ENCODE measurements at regions of chr14 and their contacts with region 1.

Region 1: DNA sequence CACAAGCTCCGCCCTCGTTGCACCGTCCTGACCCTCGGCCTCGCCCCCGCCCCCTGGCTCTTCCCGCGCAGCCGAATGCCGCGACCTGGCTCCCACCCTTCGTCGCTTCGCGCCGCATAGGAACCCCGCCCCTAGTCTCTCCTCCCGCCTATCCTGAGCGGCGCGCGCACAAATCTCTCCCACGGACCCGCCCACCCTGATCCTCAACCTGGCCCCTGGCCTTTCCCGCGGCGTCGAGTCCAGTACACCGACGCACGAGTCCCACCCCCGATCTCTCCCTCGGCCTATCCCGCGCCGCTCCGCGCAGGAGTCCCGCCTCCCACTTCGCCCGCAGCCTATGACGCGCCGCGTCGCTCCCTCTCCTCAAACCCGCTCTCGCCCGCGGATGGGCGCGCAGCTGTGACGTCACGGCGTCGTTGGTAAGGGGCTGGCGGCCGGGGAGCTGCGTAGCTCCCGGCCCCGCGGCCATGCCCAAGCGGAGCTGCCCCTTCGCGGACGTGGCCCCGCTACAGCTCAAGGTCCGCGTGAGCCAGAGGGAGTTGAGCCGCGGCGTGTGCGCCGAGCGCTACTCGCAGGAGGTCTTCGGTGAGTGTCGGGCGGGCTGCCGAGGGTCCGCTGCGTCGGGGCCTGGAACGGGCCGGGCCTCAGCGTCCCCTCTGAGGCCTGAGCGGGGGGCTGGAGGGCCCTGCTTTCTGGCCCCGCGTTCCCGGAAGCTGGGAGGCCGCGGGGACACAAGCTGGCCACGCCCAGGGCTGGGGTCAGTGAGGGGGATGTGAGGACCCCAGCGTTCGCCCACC is at the start of gene SIVA1:
- DNase-seq: peak; percentile 100
- H3K4me3 Mint-ChIP-seq: peak within 1 kb of the TSS; percentile 78
- H3K27ac Mint-ChIP-seq: peak within 1 kb of the TSS; percentile 90
- H3K4me1 Mint-ChIP-seq: peaks cover 42% of the 10 kb centered on the region
- H3K27me3 Mint-ChIP-seq: no peaks in the 10 kb centered on the region
- total RNA-seq, gene SIVA1: 87.0 to 96.2 TPM

Region 2: DNA sequence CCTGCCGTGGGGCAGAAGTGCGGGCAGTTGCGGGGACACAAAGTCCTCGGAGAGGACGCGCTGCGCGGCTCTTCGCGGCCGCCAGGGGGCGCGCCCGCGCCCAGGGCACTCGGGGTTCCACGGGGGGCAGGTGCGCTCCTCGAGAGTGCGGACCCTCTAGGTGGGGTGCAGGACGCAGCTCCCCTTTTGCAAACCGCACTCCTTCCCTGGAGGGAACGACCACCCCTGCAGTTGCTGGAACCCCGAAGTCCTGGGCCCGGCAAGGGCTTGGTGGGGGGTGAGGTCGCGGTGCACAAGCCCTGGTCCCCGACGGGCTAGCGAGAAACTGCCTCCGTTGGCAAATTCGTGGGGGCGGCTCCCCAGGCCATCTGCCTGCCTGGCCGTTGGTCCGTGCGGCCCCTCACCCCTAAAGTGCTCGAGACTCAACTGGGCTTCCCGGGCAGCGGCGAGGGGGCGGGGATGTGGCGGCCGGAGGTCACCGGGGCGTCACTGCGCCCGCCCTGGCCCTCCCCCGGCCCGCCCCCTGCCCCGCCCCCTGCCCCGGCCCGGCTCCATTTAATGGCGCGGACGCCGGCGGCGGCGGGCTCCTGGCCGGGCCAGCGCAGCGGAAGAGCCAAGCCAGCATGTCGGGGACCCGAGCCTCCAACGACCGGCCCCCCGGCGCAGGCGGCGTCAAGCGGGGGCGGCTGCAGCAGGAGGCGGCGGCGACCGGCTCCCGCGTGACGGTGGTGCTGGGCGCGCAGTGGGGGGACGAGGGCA is 29.1 kb before region 1 on chr14 and contains the start of gene ADSS1:
- CTCF ChIA-PET with region 1: interaction called, 12 read pairs
- POLR2A ChIA-PET with region 1: interaction called, 29 read pairs
- DNase-seq: peak; percentile 66
- H3K4me3 Mint-ChIP-seq: peak within 1 kb of the TSS; percentile 52
- H3K27ac Mint-ChIP-seq: no peak within 1 kb of the TSS
- H3K4me1 Mint-ChIP-seq: no peaks in the 10 kb centered on the region
- H3K27me3 Mint-ChIP-seq: no peaks in the 10 kb centered on the region
- total RNA-seq, gene ADSS1: 0.98 to 1.2 TPM

Region 3: GRCh38 chr14:104735830-104736642 is 16.9 kb before region 1 on chr14:
- CTCF ChIA-PET with region 1: no interaction called
- POLR2A ChIA-PET with region 1: interaction called, 11 read pairs
- DNase-seq: no peak
- H3K4me3 Mint-ChIP-seq: no peak overlapping the region
- H3K27ac Mint-ChIP-seq: no peak overlapping the region
- H3K4me1 Mint-ChIP-seq: no peaks in the 10 kb centered on the region
- H3K27me3 Mint-ChIP-seq: peaks cover 6% of the 10 kb centered on the region

Region 4: GRCh38 chr14:104768437-104769323 is 15.7 kb after region 1 on chr14:
- CTCF ChIA-PET with region 1: interaction called, 29 read pairs
- POLR2A ChIA-PET with region 1: interaction called, 10 read pairs
- DNase-seq: peak; percentile 92
- H3K4me3 Mint-ChIP-seq: no peak overlapping the region
- H3K27ac Mint-ChIP-seq: peak overlapping the region; percentile 16
- H3K4me1 Mint-ChIP-seq: peaks cover 2% of the 10 kb centered on the region
- H3K27me3 Mint-ChIP-seq: no peaks in the 10 kb centered on the region

Region 5: GRCh38 chr14:104800015-104800770 is 47.3 kb after region 1 on chr14:
- CTCF ChIA-PET with region 1: interaction called, 3 read pairs
- POLR2A ChIA-PET with region 1: interaction called, 19 read pairs
- DNase-seq: peak; percentile 85
- H3K4me3 Mint-ChIP-seq: peak overlapping the region; percentile 57
- H3K27ac Mint-ChIP-seq: no peak overlapping the region
- H3K4me1 Mint-ChIP-seq: peaks cover 29% of the 10 kb centered on the region
- H3K27me3 Mint-ChIP-seq: peaks cover 9% of the 10 kb centered on the region

Region 6: GRCh38 chr14:104826189-104826860 is 73.4 kb after region 1 on chr14:
- CTCF ChIA-PET with region 1: interaction called, 14 read pairs
- POLR2A ChIA-PET with region 1: interaction called, 13 read pairs
- DNase-seq: peak; percentile 95
- H3K4me3 Mint-ChIP-seq: peak overlapping the region; percentile 72
- H3K27ac Mint-ChIP-seq: no peak overlapping the region
- H3K4me1 Mint-ChIP-seq: peaks cover 23% of the 10 kb centered on the region
- H3K27me3 Mint-ChIP-seq: peaks cover 29% of the 10 kb centered on the region

Measured in activated CD4-positive, alpha-beta memory T cell treated with anti-CD3 and anti-CD28 coated beads, Interleukin-2, amount 10 ng/mL, durations not matched to agents 7 days and 5 days (primary cell).